Activated T-helper 2 cell treated with anti-CD3 and anti-CD28 coated beads, Interferon-gamma antibody, Interleukin-2, Interleukin-4, amounts not matched to agents 10 μg/mL and 5 μg/mL and 100 μg/mL, durations not matched to agents 14 hours and 24 hours and 36 hours (primary cell): ENCODE measurements at regions of chr17 and their contacts with region 1.

Region 1: DNA sequence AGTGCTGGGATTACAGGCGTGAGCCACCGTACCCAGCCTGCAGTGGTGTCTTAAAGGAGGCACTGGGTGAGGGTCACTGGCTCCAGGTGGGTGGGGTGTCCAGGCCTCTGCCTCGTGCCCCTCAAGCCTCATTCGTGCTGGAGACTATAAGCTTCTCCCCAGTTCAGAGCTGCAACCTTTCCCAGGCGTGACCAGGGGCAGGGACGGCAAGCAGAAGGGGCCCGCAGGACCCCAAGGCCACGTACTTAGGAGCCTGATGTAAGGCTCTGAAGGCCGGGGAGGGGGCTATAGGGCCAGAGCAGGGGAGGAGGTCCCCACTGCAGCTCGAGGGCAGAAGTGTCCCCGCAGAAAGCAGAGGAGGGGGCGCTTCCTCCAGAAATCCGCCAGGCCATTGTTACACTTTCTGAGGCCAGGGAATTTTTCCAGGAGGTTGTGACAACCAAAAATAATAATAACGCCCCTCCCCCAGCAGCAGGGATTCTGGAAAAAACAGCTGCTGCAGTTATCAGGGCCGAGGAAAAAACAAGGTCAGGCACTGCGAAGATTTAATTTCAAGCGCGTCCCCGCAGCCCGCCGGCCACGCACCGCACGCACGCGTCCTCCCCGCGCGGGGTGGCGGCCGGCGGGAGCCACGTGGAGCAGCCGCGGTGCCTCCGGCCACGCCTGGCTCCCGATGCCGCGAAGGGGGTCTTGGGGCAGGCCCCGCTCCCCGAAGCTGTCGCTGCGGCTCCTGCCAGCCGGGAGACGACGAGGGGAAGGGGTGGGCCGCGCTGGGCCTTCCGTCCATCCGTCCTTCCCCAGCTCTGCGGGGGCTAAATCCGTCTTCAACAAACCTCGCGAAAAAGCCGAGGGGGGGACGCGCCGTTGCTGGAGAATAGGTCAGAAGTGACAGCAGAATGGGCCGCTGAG is 45.8 kb upstream of the SLC38A10 start:
- DNase-seq: no peak
- H3K4me3 Mint-ChIP-seq: no peak overlapping the region
- H3K27ac Mint-ChIP-seq: no peak overlapping the region
- H3K4me1 Mint-ChIP-seq: peaks cover 7% of the 10 kb centered on the region
- H3K27me3 Mint-ChIP-seq: peaks cover 33% of the 10 kb centered on the region

Region 2: GRCh38 chr17:81427173-81428120 is 86.6 kb after region 1 on chr17:
- intact Hi-C with region 1: loop called (anchors 2 kb)
- DNase-seq: no peak
- H3K4me3 Mint-ChIP-seq: no peak overlapping the region
- H3K27ac Mint-ChIP-seq: no peak overlapping the region
- H3K4me1 Mint-ChIP-seq: no peaks in the 10 kb centered on the region
- H3K27me3 Mint-ChIP-seq: peaks cover 13% of the 10 kb centered on the region

Region 3: DNA sequence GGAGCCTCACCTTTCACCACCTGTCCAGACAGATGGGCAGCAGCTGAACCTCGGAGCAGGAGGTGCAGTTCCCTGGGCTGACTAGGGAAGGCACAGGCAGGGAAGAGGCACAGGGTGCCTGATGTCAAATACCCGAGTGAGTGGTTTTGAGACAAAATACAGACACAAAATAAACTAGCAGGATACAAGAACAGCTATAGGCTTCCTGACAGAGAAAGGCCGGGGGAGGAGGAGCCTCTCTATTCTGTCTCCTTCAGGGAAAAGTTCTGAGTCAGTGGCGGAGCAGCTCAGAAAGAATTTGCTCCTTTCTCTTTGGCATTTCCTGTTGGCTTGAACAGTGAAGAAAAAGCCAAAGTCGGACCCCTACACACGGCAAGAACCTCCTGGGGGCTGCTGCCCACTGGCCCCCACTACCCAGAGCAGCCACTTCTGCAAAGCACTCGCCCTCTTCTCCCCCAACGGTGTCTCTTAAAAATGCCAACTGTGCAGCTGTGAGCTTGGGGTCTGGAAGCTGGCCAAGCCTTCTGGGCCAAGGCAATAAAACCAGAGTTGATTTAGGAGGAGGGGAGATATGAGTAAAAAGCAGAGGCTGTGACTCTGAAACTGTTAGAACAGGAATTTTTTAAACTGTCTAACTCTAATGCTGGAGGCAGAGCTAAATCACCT is 225.7 kb after region 1 on chr17:
- intact Hi-C with region 1: no loop called
- DNase-seq: no peak
- H3K4me3 Mint-ChIP-seq: no peak overlapping the region
- H3K27ac Mint-ChIP-seq: no peak overlapping the region
- H3K4me1 Mint-ChIP-seq: no peaks in the 10 kb centered on the region
- H3K27me3 Mint-ChIP-seq: no peaks in the 10 kb centered on the region